ENCODE measurements at regions of chr20 and their contacts with region 1.

Region 1: DNA sequence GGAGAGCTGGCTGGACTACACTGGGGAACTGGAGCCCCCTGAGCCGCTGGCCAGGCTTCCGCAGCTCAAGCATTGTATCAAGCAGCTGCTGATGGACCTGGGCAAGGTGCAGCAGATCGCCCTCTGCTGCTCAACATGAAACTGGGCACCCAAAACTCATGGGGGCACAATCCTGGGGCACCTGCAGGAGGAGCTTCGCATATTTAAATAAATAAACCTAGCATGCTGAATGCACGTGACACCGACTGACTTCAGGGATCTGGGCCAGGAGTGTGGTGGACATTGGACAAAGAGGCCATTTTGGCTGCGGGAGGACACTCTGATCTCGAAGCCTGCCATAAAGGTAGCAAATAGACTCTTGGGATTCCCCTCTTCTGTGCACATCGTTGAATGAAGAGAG is 6.8 kb downstream of the SCAND1 start:
- DNase-seq: peak in 1 of 2 experiments; percentile 27
- H3K4me3 ChIP-seq: no peak overlapping the region
- H3K27ac ChIP-seq: no peak overlapping the region
- H3K4me1 ChIP-seq: peaks cover 9% of the 10 kb centered on the region
- H3K27me3 ChIP-seq: no peaks in the 10 kb centered on the region
- CTCF ChIP-seq: peak; percentile 53

Region 2: GRCh38 chr20:35901678-35902544 is 45.6 kb before region 1 on chr20:
- CTCF ChIA-PET with region 1: interaction called, 11 read pairs
- POLR2A ChIA-PET with region 1: interaction called, 8 read pairs
- intact Hi-C with region 1: no loop called
- DNase-seq: peak; percentile 35 to 63
- H3K4me3 ChIP-seq: no peak overlapping the region
- H3K27ac ChIP-seq: peak overlapping the region; percentile 76
- H3K4me1 ChIP-seq: peaks cover 22% of the 10 kb centered on the region
- H3K27me3 ChIP-seq: no peaks in the 10 kb centered on the region
- CTCF ChIP-seq: no peak

Measured in PC-9 (cell line).